Naive thymus-derived CD4-positive, alpha-beta T cell (primary cell): ENCODE measurements at regions of chr18 and their contacts with region 1.

Region 1: DNA sequence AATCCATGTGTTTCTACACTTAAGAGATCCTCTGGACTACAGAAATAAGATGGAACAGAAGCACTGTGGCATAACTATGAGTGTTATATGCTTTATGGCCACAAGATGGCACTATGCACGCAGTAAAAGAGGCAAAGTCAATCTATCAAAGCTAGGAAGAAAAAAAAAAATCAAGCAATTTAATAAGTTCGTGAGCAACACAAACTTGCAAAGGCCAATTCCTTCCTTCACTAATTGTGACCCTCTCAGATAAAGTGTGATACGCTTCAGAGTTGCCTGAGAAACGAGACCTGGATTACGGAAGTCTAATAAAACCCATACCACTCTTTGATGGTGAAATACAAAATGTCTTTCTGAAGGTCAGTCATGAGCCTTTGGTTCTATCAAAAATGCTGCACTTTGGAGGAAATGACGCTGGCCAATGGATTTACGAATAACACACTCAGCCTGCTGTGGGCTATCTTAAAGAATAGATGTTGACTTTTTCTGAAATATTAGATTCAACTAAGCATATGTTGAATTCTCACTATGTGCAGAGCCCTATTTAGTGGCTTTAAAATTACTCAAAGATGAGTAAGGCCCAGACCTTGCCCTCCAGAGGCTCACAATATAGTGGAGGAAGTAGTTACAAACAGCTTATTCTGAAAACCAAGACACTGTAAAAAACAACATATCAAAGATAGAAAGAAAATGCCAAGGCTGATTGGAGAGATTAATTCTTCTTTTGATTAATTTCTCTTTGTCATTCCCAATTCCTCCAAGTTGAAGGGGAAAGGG is 35.5 kb upstream of the TTR start:
- DNase-seq: peak in 7 of 9 donors; percentile 19 to 59 (median 41)
- ATAC-seq: peak; percentile 81
- H3K4me3 ChIP-seq: no peak overlapping the region
- H3K4me3 Mint-ChIP-seq: peak overlapping the region in 1 of 10 donors; percentile 67
- H3K27ac ChIP-seq: no peak overlapping the region
- H3K27ac Mint-ChIP-seq: peak overlapping the region in 2 of 9 donors; percentile 9
- H3K4me1 ChIP-seq: no peaks in the 10 kb centered on the region
- H3K4me1 Mint-ChIP-seq: peaks cover 0 to 3% (median 0%) of the 10 kb centered on the region in 7 donors
- H3K27me3 ChIP-seq: no peaks in the 10 kb centered on the region
- H3K27me3 Mint-ChIP-seq: peaks cover 6 to 27% (median 19%) of the 10 kb centered on the region in 5 donors

Region 2: DNA sequence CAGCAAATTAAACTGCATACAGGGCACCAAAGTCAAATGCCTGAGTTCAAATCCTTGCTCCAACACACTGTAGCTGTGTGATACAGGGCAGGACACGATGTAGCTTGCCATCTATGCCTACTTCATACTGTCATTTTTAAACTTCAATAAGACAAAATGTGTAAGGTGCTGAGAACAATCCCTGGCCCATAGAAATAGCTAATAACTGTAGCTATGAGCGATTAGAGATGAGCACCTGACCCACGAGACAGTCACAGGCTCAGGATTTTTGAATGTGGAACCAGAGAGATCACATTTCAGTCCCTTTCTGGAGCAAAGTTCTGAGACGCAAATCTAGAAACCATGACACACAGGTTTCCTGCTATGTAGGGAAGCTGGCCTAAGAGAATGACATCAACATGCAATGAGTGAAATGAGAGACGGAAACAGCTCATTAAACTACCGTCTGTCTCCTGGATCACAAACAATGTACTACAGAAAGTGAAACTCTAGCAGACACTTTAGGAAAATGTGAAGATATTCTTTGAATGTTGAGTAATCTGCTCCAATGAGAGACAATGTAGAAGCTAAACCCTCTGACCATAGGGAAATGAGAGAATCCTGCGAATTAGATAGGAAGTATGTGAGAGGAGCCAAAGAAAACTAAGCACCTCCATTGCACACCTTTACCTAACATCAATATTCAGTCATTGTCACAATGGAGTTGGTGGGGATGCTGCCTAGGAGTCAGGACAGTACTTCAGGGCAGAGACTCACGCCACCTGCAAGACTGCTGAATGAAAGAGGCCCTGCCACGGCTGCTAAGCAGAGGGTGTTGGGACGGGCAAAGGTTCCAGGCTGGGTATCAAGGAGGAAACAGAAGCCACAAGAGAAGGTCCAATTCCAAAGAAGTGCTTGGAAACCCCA is 102.8 kb after region 1 on chr18:
- CTCF ChIA-PET with region 1: no interaction called
- POLR2A ChIA-PET with region 1: no interaction called
- intact Hi-C with region 1: loop called in 1 of 2 experiments (anchors 1 kb)
- DNase-seq: peak in 2 of 9 donors; percentile 1 to 4
- ATAC-seq: peak; percentile 67
- H3K4me3 ChIP-seq: no peak overlapping the region
- H3K4me3 Mint-ChIP-seq: peak overlapping the region in 3 of 10 donors; percentile 12 to 65 (median 19)
- H3K27ac ChIP-seq: no peak overlapping the region
- H3K27ac Mint-ChIP-seq: peak overlapping the region in 2 of 9 donors; percentile 32 to 76
- H3K4me1 ChIP-seq: no peaks in the 10 kb centered on the region
- H3K4me1 Mint-ChIP-seq: peaks cover 0 to 14% (median 4%) of the 10 kb centered on the region in 7 donors
- H3K27me3 ChIP-seq: peaks cover 0 to 3% of the 10 kb centered on the region in 2 donors
- H3K27me3 Mint-ChIP-seq: peaks cover under 1 to 10% (median 7%) of the 10 kb centered on the region in 5 donors

Region 3: DNA sequence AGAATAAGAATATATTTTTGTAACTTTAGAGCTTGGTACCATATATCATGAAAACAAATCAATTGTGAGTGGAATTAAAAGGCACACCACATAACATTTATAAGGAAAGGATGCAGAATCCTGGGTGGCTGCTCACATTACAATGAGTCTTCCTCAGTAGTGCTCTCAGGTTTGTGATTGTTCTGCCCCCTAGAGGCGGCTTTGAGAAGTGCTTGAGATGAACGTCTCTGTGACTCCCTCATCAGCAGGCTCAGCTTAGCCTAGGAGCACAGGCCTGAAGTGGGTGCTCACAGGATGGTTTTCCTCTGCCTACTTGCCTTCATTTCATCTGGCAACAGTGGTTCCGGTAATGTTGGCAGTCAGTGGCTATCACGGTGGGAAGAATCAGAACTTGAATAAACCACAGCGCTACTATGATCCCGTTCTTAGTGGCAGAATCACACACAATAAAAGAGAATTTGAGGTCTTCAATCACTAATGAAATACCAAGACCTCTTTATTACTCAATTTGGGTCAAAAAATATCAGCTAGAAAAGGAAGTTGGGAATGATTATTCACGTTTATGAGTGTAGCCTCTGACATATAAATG is 166.3 kb after region 1 on chr18:
- CTCF ChIA-PET with region 1: interaction called, 7 read pairs
- POLR2A ChIA-PET with region 1: no interaction called
- intact Hi-C with region 1: loop called (anchors 1 kb)
- DNase-seq: peak; percentile 33 to 69 (median 62)
- ATAC-seq: peak; percentile 90
- H3K4me3 ChIP-seq: no peak overlapping the region
- H3K4me3 Mint-ChIP-seq: peak overlapping the region in 3 of 10 donors; percentile 19 to 31 (median 27)
- H3K27ac ChIP-seq: no peak overlapping the region
- H3K27ac Mint-ChIP-seq: peak overlapping the region in 1 of 9 donors; percentile 21
- H3K4me1 ChIP-seq: no peaks in the 10 kb centered on the region
- H3K4me1 Mint-ChIP-seq: peaks cover 0 to 8% (median 6%) of the 10 kb centered on the region in 7 donors
- H3K27me3 ChIP-seq: no peaks in the 10 kb centered on the region
- H3K27me3 Mint-ChIP-seq: peaks cover 14 to 35% (median 23%) of the 10 kb centered on the region in 5 donors

Region 4: DNA sequence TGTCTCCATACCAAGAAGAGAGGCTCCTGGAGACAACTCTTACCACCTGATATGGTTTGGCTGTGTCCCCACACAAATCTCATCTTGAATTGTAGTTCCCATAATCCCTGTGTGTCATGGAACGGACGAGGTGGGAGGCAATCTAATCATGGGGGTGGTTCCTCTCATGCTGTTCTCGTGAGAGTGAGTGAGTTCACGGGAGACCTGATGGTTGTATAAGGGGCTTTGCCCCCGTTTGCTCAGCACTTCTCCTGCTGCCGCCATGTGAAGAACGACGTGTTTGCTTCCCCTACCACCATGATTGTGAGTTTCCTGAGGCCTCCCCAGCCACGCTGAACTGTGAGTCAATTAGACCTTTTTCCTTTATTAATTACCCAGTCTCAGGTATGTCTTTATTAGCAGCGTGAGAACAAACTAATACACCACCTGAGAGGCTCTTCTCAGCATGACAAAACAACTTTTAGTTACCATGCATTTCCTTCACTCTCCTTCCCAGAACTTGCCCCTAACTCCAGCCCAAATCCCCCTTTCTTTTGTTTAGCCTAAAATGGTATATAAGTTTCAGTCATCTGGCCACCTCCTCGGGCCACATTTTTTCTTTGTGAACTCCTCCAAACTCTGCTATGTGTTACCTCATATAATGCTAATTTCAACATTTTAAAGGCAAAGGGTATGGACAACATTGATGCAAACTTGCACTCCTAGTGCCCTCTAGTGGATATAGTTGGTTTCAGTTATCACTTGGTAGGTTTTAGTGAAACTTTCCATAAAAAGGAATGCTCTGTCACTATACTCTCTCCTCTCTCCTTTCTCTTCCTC is 263.2 kb after region 1 on chr18:
- CTCF ChIA-PET with region 1: no interaction called
- POLR2A ChIA-PET with region 1: no interaction called
- intact Hi-C with region 1: loop called (anchors 1 kb)
- DNase-seq: peak in 5 of 9 donors; percentile 8 to 27 (median 14)
- ATAC-seq: peak; percentile 75
- H3K4me3 ChIP-seq: no peak overlapping the region
- H3K4me3 Mint-ChIP-seq: no peak overlapping the region
- H3K27ac ChIP-seq: no peak overlapping the region
- H3K27ac Mint-ChIP-seq: no peak overlapping the region
- H3K4me1 ChIP-seq: no peaks in the 10 kb centered on the region
- H3K4me1 Mint-ChIP-seq: peaks cover 0 to 3% (median 0%) of the 10 kb centered on the region in 7 donors
- H3K27me3 ChIP-seq: no peaks in the 10 kb centered on the region
- H3K27me3 Mint-ChIP-seq: peaks cover 0 to 8% (median 5%) of the 10 kb centered on the region in 5 donors

Region 5: DNA sequence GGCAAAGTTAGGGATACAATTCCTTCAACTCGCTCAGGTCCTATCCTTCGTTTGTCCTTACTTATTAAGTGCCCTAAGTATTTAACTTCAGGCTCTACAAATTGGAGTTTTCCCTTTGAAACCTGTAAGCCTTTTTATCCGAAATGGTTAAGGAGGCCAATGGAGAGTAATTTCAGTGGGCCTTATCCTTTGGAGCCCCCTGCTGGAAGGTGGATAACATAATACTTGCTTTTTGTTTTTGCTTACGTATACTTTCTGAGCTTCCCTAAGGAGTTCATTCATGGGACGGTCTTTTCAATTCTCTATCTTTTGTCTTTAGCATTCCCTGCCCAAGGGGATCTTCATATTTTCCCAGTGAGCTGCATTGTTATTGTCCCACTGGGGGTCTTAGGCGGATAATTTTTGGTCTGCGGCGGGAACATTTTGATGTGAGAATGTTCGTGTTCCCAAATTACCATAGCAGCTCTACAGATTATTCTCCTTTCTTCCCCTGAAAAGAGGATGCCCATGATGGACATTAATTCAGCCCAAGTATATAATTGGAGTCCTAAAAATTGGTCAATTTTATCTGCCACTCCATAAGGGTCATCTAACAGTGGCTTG is 421.2 kb after region 1 on chr18:
- CTCF ChIA-PET with region 1: no interaction called
- POLR2A ChIA-PET with region 1: no interaction called
- intact Hi-C with region 1: loop called in 1 of 2 experiments (anchors 5 kb)
- DNase-seq: peak in 6 of 9 donors; percentile 12 to 40 (median 29)
- ATAC-seq: peak; percentile 63
- H3K4me3 ChIP-seq: no peak overlapping the region
- H3K4me3 Mint-ChIP-seq: no peak overlapping the region
- H3K27ac ChIP-seq: no peak overlapping the region
- H3K27ac Mint-ChIP-seq: no peak overlapping the region
- H3K4me1 ChIP-seq: no peaks in the 10 kb centered on the region
- H3K4me1 Mint-ChIP-seq: peaks cover 0 to 2% (median 0%) of the 10 kb centered on the region in 7 donors
- H3K27me3 ChIP-seq: no peaks in the 10 kb centered on the region
- H3K27me3 Mint-ChIP-seq: peaks cover 0 to 2% (median 0%) of the 10 kb centered on the region in 5 donors